Activated CD4-positive, alpha-beta memory T cell treated with anti-CD3 and anti-CD28 coated beads, Interleukin-2, amount 10 ng/mL, durations not matched to agents 7 days and 5 days (primary cell): ENCODE measurements at regions of chr16 and their contacts with region 1.

Region 1: DNA sequence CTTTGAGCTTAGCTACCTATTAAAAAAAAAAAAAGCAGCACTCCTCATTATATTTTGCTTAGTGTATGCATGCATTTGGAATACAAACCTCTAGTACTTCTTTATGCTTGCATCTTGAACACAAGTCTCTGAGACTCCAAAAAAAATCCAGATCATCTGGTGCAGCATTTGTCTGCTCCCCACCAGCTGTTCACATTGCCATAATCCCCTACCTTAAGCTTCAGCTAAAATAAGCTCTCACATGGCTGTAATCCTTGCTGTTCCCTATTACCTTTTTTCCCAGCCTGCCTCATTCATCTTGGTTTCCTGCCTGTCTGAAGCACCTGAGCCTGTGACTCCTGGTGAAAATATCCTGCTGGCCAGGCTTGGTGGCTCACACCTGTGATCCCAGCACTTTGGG is 7.5 kb upstream of the NFATC2IP start:
- DNase-seq: no peak
- H3K4me3 Mint-ChIP-seq: no peak overlapping the region
- H3K27ac Mint-ChIP-seq: no peak overlapping the region
- H3K4me1 Mint-ChIP-seq: peaks cover 23% of the 10 kb centered on the region
- H3K27me3 Mint-ChIP-seq: peaks cover 2% of the 10 kb centered on the region

Region 2: DNA sequence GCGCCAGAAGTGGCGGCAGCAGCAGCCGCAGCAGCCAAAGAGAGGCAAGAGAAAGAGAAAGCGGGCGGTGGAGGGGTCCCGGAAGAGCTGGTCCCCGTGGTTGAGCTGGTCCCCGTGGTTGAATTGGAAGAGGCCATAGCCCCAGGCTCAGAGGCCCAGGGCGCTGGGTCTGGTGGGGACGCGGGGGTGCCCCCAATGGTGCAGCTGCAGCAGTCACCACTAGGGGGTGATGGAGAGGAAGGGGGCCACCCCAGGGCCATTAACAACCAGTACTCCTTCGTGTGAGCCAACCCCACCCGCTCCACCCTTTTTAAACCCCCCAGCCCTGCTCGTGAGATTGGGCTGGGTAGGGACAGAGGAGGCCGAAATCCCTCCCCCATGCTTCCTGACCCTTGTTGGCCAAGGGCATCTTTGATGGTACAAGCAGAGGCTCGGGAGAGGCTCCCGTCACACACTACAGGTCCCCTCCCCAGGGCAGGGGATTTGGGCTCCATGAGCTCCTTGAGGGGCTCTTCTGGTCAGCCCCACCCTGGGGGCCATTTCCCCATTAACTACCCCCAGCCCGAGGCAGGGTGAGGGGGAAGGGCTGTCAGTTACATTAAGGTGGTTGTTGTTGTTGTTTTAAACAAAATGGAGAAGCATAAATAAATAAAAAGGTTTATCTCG is 69.6 kb before region 1 on chr16:
- CTCF ChIA-PET with region 1: interaction called, 20 read pairs
- POLR2A ChIA-PET with region 1: no interaction called
- DNase-seq: peak; percentile 62
- H3K4me3 Mint-ChIP-seq: no peak overlapping the region
- H3K27ac Mint-ChIP-seq: no peak overlapping the region
- H3K4me1 Mint-ChIP-seq: peaks cover 12% of the 10 kb centered on the region
- H3K27me3 Mint-ChIP-seq: no peaks in the 10 kb centered on the region

Region 3: GRCh38 chr16:28879841-28880588 is 63.3 kb before region 1 on chr16:
- CTCF ChIA-PET with region 1: interaction called, 20 read pairs
- POLR2A ChIA-PET with region 1: interaction called, 10 read pairs
- DNase-seq: peak; percentile 93
- H3K4me3 Mint-ChIP-seq: peak overlapping the region; percentile 88
- H3K27ac Mint-ChIP-seq: peak overlapping the region; percentile 26
- H3K4me1 Mint-ChIP-seq: peaks cover 35% of the 10 kb centered on the region
- H3K27me3 Mint-ChIP-seq: peaks cover 6% of the 10 kb centered on the region

Region 4: DNA sequence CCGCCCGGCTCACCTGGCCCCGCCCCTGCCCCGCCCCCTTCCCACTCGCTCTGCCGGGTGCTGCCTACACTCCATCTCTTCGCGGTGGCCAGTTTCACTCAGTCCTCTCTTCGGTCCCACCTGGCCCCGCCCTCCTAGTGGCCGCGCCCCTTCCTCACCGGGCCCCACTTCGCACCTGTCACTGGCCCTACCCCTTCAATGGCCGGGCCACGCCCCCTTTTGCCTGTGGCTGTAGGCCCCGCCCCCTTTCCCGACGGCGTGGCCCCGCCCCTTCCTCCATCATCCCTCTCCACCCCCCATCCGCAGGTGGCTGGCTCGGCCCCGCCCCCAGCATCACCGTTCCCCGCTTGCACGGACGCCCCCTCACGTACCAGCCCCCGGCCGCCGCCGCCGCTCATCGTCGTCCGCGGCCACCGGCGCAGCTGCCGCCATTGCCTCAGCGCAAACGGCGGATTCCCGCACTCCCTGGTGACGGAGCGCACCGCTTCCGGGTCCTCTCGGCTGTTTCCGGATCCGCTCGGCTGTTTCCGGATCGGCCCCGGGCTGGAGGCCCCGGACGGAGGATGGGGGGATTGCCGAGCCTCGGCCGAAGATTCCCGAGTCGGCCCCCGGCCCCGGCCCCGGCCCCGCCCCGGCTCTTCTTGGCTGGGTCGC is 18.4 kb before region 1 on chr16 and contains the start of gene RABEP2:
- CTCF ChIA-PET with region 1: interaction called, 20 read pairs
- POLR2A ChIA-PET with region 1: interaction called, 10 read pairs
- DNase-seq: peak; percentile 95
- H3K4me3 Mint-ChIP-seq: peak within 1 kb of the TSS; percentile 97
- H3K27ac Mint-ChIP-seq: peak within 1 kb of the TSS; percentile 95
- H3K4me1 Mint-ChIP-seq: peaks cover 20% of the 10 kb centered on the region
- H3K27me3 Mint-ChIP-seq: no peaks in the 10 kb centered on the region
- total RNA-seq, gene RABEP2: 15.7 to 16.5 TPM

Region 5: DNA sequence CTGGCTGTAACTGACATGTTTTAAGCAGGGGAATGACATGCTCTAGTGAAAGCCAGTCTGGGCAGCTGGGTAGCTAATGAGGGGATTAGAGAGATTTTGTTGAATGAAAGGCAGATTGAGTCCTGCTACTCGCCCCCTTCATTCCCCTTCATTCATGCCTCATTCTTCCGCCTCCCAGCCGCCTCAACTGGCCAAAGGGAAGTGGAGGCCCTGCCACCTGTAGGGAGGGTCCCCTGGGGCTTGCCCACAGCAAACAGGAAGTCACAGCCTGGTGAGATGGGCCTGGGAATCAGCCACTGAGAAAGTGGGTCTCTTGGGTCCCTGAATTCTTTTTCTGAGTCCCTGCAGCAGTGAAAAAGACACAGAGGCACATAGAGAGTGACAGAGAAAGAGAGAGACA is 12.6 kb before region 1 on chr16:
- CTCF ChIA-PET with region 1: interaction called, 37 read pairs
- POLR2A ChIA-PET with region 1: interaction called, 10 read pairs
- DNase-seq: no peak
- H3K4me3 Mint-ChIP-seq: no peak overlapping the region
- H3K27ac Mint-ChIP-seq: peak overlapping the region; percentile 23
- H3K4me1 Mint-ChIP-seq: peaks cover 19% of the 10 kb centered on the region
- H3K27me3 Mint-ChIP-seq: no peaks in the 10 kb centered on the region